Stomach (tissue), 19 donors: ENCODE measurements at regions of chr5 and their contacts with region 1.

Region 1: GRCh38 chr5:7251132-7251531 is 144.8 kb upstream of the ADCY2 start:
- DNase-seq: no peak
- H3K4me3 ChIP-seq: no peak overlapping the region
- H3K27ac ChIP-seq: no peak overlapping the region
- H3K4me1 ChIP-seq: no peaks in the 10 kb centered on the region
- H3K27me3 ChIP-seq: no peaks in the 10 kb centered on the region
- CTCF ChIP-seq: no peak
- EP300 ChIP-seq: no peak
- POLR2A ChIP-seq: no peak

Region 2: GRCh38 chr5:6576861-6577501 is 674.2 kb before region 1 on chr5:
- intact Hi-C with region 1: no loop called
- DNase-seq: peak in 1 of 2 donors; percentile 54
- H3K4me3 ChIP-seq: no peak overlapping the region
- H3K27ac ChIP-seq: no peak overlapping the region
- H3K4me1 ChIP-seq: no peaks in the 10 kb centered on the region
- H3K27me3 ChIP-seq: peaks cover 0 to 31% (median 5%) of the 10 kb centered on the region in 3 donors
- CTCF ChIP-seq: peak in 2 of 7 experiments; percentile 22 to 29
- EP300 ChIP-seq: no peak
- POLR2A ChIP-seq: no peak

Region 3: GRCh38 chr5:7391814-7392692 is 140.9 kb after region 1 on chr5:
- intact Hi-C with region 1: no loop called
- DNase-seq: peak; percentile 71 to 83
- H3K4me3 ChIP-seq: no peak overlapping the region
- H3K27ac ChIP-seq: peak overlapping the region in 4 of 5 donors; percentile 12 to 44 (median 34)
- H3K4me1 ChIP-seq: peaks cover 7 to 38% (median 28%) of the 10 kb centered on the region in 4 donors
- H3K27me3 ChIP-seq: peaks cover 0 to 30% (median 16%) of the 10 kb centered on the region in 3 donors
- CTCF ChIP-seq: peak in 5 of 7 experiments; percentile 38 to 44 (median 41)
- EP300 ChIP-seq: no peak
- POLR2A ChIP-seq: no peak

Region 4: GRCh38 chr5:7754992-7755596 is 504.0 kb after region 1 on chr5:
- intact Hi-C with region 1: loop called (anchors 10 kb)
- DNase-seq: peak; percentile 76 to 86
- H3K4me3 ChIP-seq: no peak overlapping the region
- H3K27ac ChIP-seq: no peak overlapping the region
- H3K4me1 ChIP-seq: peaks cover 0 to 5% (median 0%) of the 10 kb centered on the region in 4 donors
- H3K27me3 ChIP-seq: no peaks in the 10 kb centered on the region
- CTCF ChIP-seq: peak in 5 of 7 experiments; percentile 59 to 75 (median 60)
- EP300 ChIP-seq: no peak
- POLR2A ChIP-seq: no peak